ENCODE measurements at regions of chr11 and their contacts with region 1.

Region 1: GRCh38 chr11:8099291-8099899 is 18.4 kb downstream of the TUB start:
- DNase-seq: peak; percentile 84
- ATAC-seq: peak; percentile 78
- H3K4me3 Mint-ChIP-seq: no peak overlapping the region
- H3K27ac Mint-ChIP-seq: no peak overlapping the region
- H3K4me1 Mint-ChIP-seq: no peaks in the 10 kb centered on the region
- H3K27me3 Mint-ChIP-seq: no peaks in the 10 kb centered on the region
- CTCF ChIP-seq: no peak; the same call in none of the 2 replicates

Region 2: GRCh38 chr11:7904914-7905313 is 194.5 kb before region 1 on chr11:
- CTCF ChIA-PET with region 1: interaction called, 18 read pairs
- POLR2A ChIA-PET with region 1: no interaction called
- DNase-seq: no peak
- ATAC-seq: no peak
- H3K4me3 Mint-ChIP-seq: 0 out of 2 replicates have a peak overlapping the region, but pooled peaks have one; percentile 3
- H3K27ac Mint-ChIP-seq: no peak overlapping the region
- H3K4me1 Mint-ChIP-seq: peaks cover 69% of the 10 kb centered on the region
- H3K27me3 Mint-ChIP-seq: no peaks in the 10 kb centered on the region
- CTCF ChIP-seq: no peak

Region 3: GRCh38 chr11:8018484-8019313 is 80.7 kb before region 1 on chr11:
- CTCF ChIA-PET with region 1: interaction called, 54 read pairs
- POLR2A ChIA-PET with region 1: no interaction called
- DNase-seq: peak; percentile 74
- ATAC-seq: peak; percentile 59
- H3K4me3 Mint-ChIP-seq: peak overlapping the region; percentile 75
- H3K27ac Mint-ChIP-seq: no peak overlapping the region
- H3K4me1 Mint-ChIP-seq: peaks cover 32% of the 10 kb centered on the region
- H3K27me3 Mint-ChIP-seq: peaks cover 81% of the 10 kb centered on the region
- CTCF ChIP-seq: no peak

Region 4: GRCh38 chr11:8056810-8057463 is 42.5 kb before region 1 on chr11:
- CTCF ChIA-PET with region 1: interaction called, 141 read pairs
- POLR2A ChIA-PET with region 1: no interaction called
- DNase-seq: no peak
- ATAC-seq: no peak
- H3K4me3 Mint-ChIP-seq: no peak overlapping the region
- H3K27ac Mint-ChIP-seq: peak overlapping the region; percentile 37; the same call in 1 of the 2 replicates
- H3K4me1 Mint-ChIP-seq: peaks cover 14% of the 10 kb centered on the region
- H3K27me3 Mint-ChIP-seq: no peaks in the 10 kb centered on the region
- CTCF ChIP-seq: no peak

Region 5: DNA sequence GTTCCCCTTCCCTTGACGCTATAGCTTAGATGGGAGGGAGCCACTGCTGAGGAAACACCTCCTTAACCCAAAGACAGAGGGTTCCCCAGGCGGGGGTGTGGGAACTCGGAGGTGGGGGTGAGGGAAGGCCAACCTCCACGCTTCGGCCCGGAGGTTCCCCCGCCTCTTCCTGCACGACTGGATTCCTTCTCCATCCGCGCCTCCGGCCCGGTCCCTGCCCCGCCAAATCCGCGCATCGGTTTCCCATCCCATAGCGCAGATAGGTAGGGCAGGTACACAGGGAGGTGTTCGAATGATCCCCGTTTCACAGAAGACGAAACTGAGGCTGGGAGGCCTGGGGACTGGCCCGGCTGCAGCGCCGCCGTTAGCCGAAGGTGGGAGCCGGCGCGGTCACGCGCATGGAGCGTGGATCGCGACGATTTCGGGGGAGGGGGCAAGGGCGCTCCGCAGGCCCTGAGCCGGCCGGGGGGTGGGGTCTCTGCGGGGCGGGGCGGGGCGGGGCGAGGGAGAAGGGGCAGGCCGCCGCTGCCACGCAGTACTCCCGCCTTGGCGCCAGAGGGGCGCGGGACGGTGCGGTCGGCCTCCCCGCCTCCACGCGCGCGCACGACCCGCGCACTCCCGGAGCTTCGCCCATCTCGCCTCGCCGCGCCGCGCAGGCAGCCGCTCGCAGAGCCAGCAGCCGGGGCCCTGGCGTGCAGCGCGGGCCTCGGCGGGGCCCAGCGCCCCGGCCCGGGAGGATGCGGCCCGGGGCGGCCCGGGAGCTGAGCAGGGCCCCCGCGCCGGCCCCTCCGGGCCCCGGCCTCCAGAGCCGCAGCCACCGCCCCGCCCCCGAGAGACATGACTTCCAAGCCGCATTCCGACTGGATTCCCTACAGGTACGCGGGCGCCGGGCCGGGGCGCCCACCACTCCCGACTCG is 18.5 kb before region 1 on chr11 and contains the start of gene TUB:
- CTCF ChIA-PET with region 1: interaction called, 115 read pairs
- POLR2A ChIA-PET with region 1: no interaction called
- DNase-seq: peak; percentile 70
- ATAC-seq: peak; percentile 44
- H3K4me3 Mint-ChIP-seq: peak within 1 kb of the TSS; percentile 79
- H3K27ac Mint-ChIP-seq: no peak within 1 kb of the TSS
- H3K4me1 Mint-ChIP-seq: peaks cover 48% of the 10 kb centered on the region
- H3K27me3 Mint-ChIP-seq: peaks cover 42% of the 10 kb centered on the region
- CTCF ChIP-seq: no peak
- total RNA-seq, gene TUB: 29.2 to 32.1 TPM (median 30.0 TPM) in 3 replicates

Region 6: GRCh38 chr11:8126649-8127289 is 27.4 kb after region 1 on chr11:
- CTCF ChIA-PET with region 1: interaction called, 10 read pairs
- POLR2A ChIA-PET with region 1: no interaction called
- DNase-seq: no peak
- ATAC-seq: no peak
- H3K4me3 Mint-ChIP-seq: no peak overlapping the region
- H3K27ac Mint-ChIP-seq: no peak overlapping the region
- H3K4me1 Mint-ChIP-seq: no peaks in the 10 kb centered on the region
- H3K27me3 Mint-ChIP-seq: no peaks in the 10 kb centered on the region
- CTCF ChIP-seq: no peak

Measured in WTC11 (cell line).